Sigmoid colon (tissue), 7 donors: ENCODE measurements at regions of chr7 and their contacts with region 1.

Region 1: DNA sequence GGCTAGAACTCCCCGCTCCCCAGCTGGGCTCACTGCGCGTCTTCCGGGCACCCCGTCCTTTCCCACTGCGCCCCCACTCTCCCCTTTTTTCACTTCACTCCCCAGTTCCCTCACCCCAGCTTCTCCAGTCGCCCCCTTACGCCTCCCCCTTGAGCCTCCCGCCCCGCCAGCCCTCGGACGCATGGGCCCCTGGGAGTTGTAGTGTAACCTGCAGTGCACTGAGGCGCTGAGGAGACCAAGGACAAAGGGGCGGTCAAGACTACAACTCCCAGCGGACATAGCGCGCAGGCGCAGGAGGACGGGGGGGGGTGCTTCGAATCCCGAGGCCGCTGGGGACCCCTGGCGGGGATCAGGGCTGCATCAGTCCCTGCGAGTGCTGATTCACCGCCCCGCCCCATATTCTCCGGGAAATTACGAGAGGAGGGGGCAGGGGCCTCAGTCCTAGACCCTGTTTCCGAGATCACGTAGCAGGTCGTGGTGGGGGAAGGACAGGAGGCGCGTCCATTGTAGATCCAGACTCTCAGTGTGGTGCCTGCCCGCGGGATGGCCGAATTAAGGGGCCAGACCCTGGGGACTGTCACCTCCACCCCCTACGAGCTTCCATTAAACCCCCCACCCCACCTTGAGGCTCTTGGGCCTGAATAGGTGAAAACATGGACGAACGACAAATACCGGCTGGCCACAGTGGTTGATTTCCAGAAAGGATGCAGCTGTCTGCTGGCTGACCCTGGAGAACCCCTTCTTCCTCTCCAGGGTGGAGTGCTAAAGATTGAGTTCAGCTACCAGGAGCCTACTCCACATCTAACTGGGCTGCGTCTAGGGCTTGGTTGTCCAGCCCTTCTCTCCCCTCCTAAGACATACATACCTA is 554 bp upstream of the YWHAG start:
- DNase-seq: peak; percentile 99
- H3K4me3 ChIP-seq: peak overlapping the region; percentile 60 to 98 (median 82)
- H3K27ac ChIP-seq: peak overlapping the region; percentile 90 to 100 (median 98)
- H3K4me1 ChIP-seq: peaks cover 4 to 45% (median 40%) of the 10 kb centered on the region in 4 donors
- H3K27me3 ChIP-seq: no peaks in the 10 kb centered on the region
- CTCF ChIP-seq: peak; percentile 52 to 79 (median 74)
- EP300 ChIP-seq: peak in 2 of 4 donors; percentile 33 to 58
- POLR2A ChIP-seq: peak; percentile 15 to 50

Region 2: DNA sequence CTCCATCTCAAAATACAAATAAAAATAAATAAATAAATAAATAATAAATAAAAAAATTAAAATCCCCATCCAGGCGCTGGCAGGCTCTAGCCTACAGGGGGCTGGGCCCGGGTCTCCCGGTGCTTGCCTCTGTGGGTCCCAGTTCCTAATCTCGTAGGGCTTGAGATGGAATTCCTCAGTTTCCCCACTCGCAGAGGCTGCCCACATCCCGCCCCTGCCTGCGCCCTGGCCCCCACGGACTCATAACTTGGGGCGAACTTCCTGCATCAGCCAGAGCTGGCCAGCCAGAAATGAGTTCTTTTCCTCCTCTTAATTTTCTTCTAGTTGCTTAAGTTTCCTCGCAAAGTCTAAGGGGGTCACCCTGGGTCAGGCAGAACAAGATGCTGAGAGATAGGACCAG is 179.7 kb before region 1 on chr7:
- intact Hi-C with region 1: loop called (anchors 5 kb)
- DNase-seq: no peak
- H3K4me3 ChIP-seq: no peak overlapping the region
- H3K27ac ChIP-seq: no peak overlapping the region
- H3K4me1 ChIP-seq: peaks cover 0 to 7% (median 0%) of the 10 kb centered on the region in 4 donors
- H3K27me3 ChIP-seq: no peaks in the 10 kb centered on the region
- CTCF ChIP-seq: no peak
- EP300 ChIP-seq: no peak
- POLR2A ChIP-seq: no peak

Region 3: DNA sequence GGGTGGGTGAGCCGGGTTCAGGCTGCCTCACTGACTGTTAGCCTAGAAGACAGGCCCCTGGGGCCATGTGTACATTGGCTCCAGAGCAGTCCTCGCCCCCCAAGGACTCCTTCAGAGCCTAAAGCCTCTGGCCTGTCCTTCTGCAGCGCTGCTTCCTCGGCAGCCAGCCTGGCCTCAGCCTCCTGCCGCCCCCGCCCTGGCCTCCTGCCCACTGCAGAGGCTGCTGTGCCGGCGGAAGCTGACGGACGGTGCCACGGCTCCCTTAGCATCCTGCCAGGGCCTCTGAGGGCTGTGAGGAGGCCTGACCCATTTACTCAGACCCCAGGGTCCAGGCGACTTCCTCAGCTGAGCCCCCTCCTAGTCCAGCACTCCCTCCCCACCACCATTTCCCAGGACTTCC is 152.7 kb before region 1 on chr7:
- intact Hi-C with region 1: no loop called
- DNase-seq: no peak
- H3K4me3 ChIP-seq: no peak overlapping the region
- H3K27ac ChIP-seq: no peak overlapping the region
- H3K4me1 ChIP-seq: peaks cover 0 to 4% (median 2%) of the 10 kb centered on the region in 4 donors
- H3K27me3 ChIP-seq: peaks cover 0 to 17% (median 9%) of the 10 kb centered on the region in 3 donors
- CTCF ChIP-seq: no peak
- EP300 ChIP-seq: no peak
- POLR2A ChIP-seq: no peak

Region 4: DNA sequence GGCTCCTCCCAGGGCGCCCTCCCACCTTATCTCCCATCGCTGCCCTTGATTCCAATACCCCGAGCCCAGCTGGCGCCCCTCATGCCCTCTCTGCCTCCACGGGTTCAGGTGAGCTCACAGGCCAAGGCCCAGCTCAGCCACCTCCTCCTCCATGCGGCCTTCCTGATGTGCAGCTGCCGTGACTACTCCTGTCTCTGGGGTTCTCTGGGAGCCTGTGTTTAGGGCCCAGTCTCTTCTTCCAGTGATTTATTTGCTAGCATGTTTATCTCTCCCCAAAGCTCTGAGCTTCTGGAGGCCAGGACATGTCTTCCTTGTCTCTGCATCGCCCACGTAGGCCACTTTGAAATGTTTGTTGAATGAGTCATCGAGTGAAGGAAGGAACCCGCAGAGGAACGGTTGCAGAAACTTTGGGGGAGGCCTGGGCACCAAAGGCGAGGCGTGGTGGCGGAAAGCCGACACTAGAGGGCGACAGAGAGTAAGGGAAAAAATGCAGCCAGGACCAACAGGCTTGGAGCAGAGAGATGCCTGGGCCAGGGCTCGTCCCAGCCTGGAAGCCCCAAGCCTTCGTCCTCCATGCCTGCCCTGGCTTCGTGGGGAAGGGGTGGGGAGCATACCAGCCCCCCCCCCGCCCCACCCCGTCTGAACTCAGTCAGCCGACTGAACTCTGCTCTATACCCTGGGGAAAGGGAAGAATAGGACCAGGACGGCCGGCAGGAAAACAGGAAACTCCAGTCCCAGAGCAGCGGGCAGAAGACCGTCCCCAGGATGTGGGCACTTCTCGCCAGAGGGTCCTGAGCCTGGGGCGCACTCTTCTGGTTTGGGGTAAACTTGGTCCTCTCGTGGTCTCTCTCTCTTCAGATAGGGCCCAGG is 67.8 kb before region 1 on chr7:
- intact Hi-C with region 1: loop called (anchors 2 kb)
- DNase-seq: peak; percentile 97
- H3K4me3 ChIP-seq: peak overlapping the region; percentile 3 to 47 (median 34)
- H3K27ac ChIP-seq: peak overlapping the region; percentile 97 to 100 (median 99)
- H3K4me1 ChIP-seq: peaks cover 0 to 56% (median 53%) of the 10 kb centered on the region in 4 donors
- H3K27me3 ChIP-seq: no peaks in the 10 kb centered on the region
- CTCF ChIP-seq: peak; percentile 94 to 100 (median 98)
- EP300 ChIP-seq: peak in 1 of 4 donors; percentile 26
- POLR2A ChIP-seq: no peak

Region 5: DNA sequence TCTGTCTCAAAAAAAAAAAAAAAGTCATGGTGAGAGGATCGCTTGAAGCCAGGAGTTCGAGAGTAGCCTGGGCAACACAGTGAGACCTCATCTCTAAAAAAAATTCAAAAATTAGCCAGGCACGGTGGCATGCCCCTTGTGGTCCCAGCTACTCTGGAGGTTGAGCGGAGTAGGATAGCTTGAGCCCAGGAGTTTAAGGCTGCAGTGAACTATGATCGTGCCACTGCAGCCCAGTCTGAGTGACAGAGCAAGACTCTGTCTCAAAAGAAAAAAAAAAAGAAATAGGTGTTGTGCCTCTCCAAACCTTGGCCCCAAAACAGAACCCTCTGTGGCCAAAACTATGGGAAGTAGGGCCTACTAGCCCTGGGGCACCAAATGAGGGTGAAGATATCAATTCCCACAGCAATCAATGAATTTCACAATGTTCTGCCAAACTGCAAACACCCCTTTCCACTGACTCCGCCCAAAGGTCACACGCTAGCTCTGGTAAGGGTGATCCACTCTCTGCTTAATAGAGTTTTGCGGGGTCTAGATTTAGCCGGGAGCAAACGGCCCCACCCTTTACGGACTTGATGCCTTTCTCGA is 33.3 kb after region 1 on chr7:
- intact Hi-C with region 1: loop called (anchors 1 kb)
- DNase-seq: no peak
- H3K4me3 ChIP-seq: peak overlapping the region; percentile 7 to 75 (median 60)
- H3K27ac ChIP-seq: peak overlapping the region; percentile 81 to 91 (median 86)
- H3K4me1 ChIP-seq: peaks cover 0 to 39% (median 25%) of the 10 kb centered on the region in 4 donors
- H3K27me3 ChIP-seq: no peaks in the 10 kb centered on the region
- CTCF ChIP-seq: no peak
- EP300 ChIP-seq: no peak
- POLR2A ChIP-seq: no peak